Caco-2 (cell line): ENCODE measurements at regions of chr9 and their contacts with region 1.

Region 1: DNA sequence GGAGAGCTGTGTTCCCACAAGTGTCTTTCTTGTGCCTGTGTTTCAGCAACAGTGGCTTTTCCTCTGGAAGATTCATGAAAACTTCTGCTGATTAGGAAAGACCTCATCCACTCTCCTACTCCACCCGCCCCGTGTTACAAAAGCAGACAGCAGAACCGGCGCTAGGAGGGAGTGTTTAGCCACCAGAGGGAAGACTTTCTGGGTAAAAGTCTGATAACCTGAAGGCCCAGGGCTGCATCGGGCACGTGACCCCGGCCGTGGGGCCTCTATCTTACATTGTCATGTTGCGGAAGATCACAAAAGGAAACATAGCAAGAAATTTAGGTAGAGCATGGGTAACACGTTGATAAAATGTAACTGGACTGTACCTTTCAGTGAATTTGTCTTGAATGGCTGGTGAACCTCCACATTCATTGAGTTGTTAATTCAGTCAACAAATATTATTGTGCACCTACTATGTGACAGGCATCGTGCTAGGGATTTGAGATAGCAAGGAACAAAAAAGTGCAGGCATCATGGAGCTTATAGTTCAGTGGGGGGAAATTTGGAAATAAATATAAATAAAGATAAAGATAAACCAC is 31.9 kb upstream of the DMRT2 start:
- DNase-seq: peak; percentile 49 to 57
- H3K4me3 ChIP-seq: no peak overlapping the region
- H3K4me3 Mint-ChIP-seq: no peak overlapping the region
- H3K27ac Mint-ChIP-seq: no peak overlapping the region
- H3K4me1 ChIP-seq: no peaks in the 10 kb centered on the region
- H3K4me1 Mint-ChIP-seq: no peaks in the 10 kb centered on the region
- H3K27me3 ChIP-seq: no peaks in the 10 kb centered on the region
- H3K27me3 Mint-ChIP-seq: peaks cover 8% of the 10 kb centered on the region
- CTCF ChIP-seq: peak; percentile 37 to 51

Region 2: GRCh38 chr9:1337161-1337560 is 318.9 kb after region 1 on chr9:
- CTCF ChIA-PET with region 1: no interaction called
- POLR2A ChIA-PET with region 1: no interaction called
- intact Hi-C with region 1: loop called (anchors 1 kb)
- DNase-seq: peak in 1 of 2 experiments; percentile 15
- H3K4me3 ChIP-seq: no peak overlapping the region
- H3K4me3 Mint-ChIP-seq: no peak overlapping the region
- H3K27ac Mint-ChIP-seq: no peak overlapping the region
- H3K4me1 ChIP-seq: no peaks in the 10 kb centered on the region
- H3K4me1 Mint-ChIP-seq: no peaks in the 10 kb centered on the region
- H3K27me3 ChIP-seq: no peaks in the 10 kb centered on the region
- H3K27me3 Mint-ChIP-seq: peaks cover 6% of the 10 kb centered on the region
- CTCF ChIP-seq: no peak

Region 3: GRCh38 chr9:1400983-1401382 is 382.8 kb after region 1 on chr9:
- CTCF ChIA-PET with region 1: no interaction called
- POLR2A ChIA-PET with region 1: no interaction called
- intact Hi-C with region 1: loop called (anchors 1 kb)
- DNase-seq: peak; percentile 3 to 34
- H3K4me3 ChIP-seq: no peak overlapping the region
- H3K4me3 Mint-ChIP-seq: no peak overlapping the region
- H3K27ac Mint-ChIP-seq: no peak overlapping the region
- H3K4me1 ChIP-seq: no peaks in the 10 kb centered on the region
- H3K4me1 Mint-ChIP-seq: no peaks in the 10 kb centered on the region
- H3K27me3 ChIP-seq: no peaks in the 10 kb centered on the region
- H3K27me3 Mint-ChIP-seq: peaks cover 14% of the 10 kb centered on the region
- CTCF ChIP-seq: peak in 1 of 2 experiments; percentile 36

Region 4: GRCh38 chr9:1429297-1429696 is 411.1 kb after region 1 on chr9:
- CTCF ChIA-PET with region 1: no interaction called
- POLR2A ChIA-PET with region 1: no interaction called
- intact Hi-C with region 1: loop called (anchors 1 kb)
- DNase-seq: peak; percentile 31 to 43
- H3K4me3 ChIP-seq: no peak overlapping the region
- H3K4me3 Mint-ChIP-seq: no peak overlapping the region
- H3K27ac Mint-ChIP-seq: no peak overlapping the region
- H3K4me1 ChIP-seq: no peaks in the 10 kb centered on the region
- H3K4me1 Mint-ChIP-seq: no peaks in the 10 kb centered on the region
- H3K27me3 ChIP-seq: no peaks in the 10 kb centered on the region
- H3K27me3 Mint-ChIP-seq: peaks cover 7% of the 10 kb centered on the region
- CTCF ChIP-seq: peak; percentile 21 to 55

Region 5: GRCh38 chr9:1619915-1620710 is 601.9 kb after region 1 on chr9:
- CTCF ChIA-PET with region 1: no interaction called
- POLR2A ChIA-PET with region 1: no interaction called
- intact Hi-C with region 1: loop called (anchors 5 kb)
- DNase-seq: peak in 1 of 2 experiments; percentile 1
- H3K4me3 ChIP-seq: no peak overlapping the region
- H3K4me3 Mint-ChIP-seq: no peak overlapping the region
- H3K27ac Mint-ChIP-seq: no peak overlapping the region
- H3K4me1 ChIP-seq: no peaks in the 10 kb centered on the region
- H3K4me1 Mint-ChIP-seq: peaks cover 5% of the 10 kb centered on the region
- H3K27me3 ChIP-seq: no peaks in the 10 kb centered on the region
- H3K27me3 Mint-ChIP-seq: peaks cover 19% of the 10 kb centered on the region
- CTCF ChIP-seq: peak; percentile 12 to 30